Common myeloid progenitor, CD34-positive (primary cell): ENCODE measurements at regions of chr6 and their contacts with region 1.

Region 1: GRCh38 chr6:29589423-29590048 is 4.6 kb downstream of the OR2H2 start:
- DNase-seq: peak; percentile 47 to 70 (median 60)
- H3K4me3 ChIP-seq: no peak overlapping the region
- H3K27ac ChIP-seq: no peak overlapping the region
- H3K4me1 ChIP-seq: peaks cover 0 to 2% (median 0%) of the 10 kb centered on the region in 4 experiments
- H3K27me3 ChIP-seq: peaks cover 0 to 10% (median 0%) of the 10 kb centered on the region in 5 experiments

Region 2: GRCh38 chr6:29376003-29376402 is 213.5 kb before region 1 on chr6:
- CTCF ChIA-PET with region 1: interaction called, 33 read pairs
- POLR2A ChIA-PET with region 1: interaction called, 3 read pairs
- DNase-seq: peak; percentile 29 to 54 (median 50)
- H3K4me3 ChIP-seq: no peak overlapping the region
- H3K27ac ChIP-seq: no peak overlapping the region
- H3K4me1 ChIP-seq: no peaks in the 10 kb centered on the region
- H3K27me3 ChIP-seq: peaks cover 0 to 2% (median 0%) of the 10 kb centered on the region in 5 experiments

Region 3: GRCh38 chr6:29577544-29577943 is 12.0 kb before region 1 on chr6:
- CTCF ChIA-PET with region 1: interaction called, 14 read pairs
- POLR2A ChIA-PET with region 1: no interaction called
- DNase-seq: no peak
- H3K4me3 ChIP-seq: no peak overlapping the region
- H3K27ac ChIP-seq: no peak overlapping the region
- H3K4me1 ChIP-seq: no peaks in the 10 kb centered on the region
- H3K27me3 ChIP-seq: peaks cover 0 to 1% (median 0%) of the 10 kb centered on the region in 5 experiments